ENCODE measurements at regions of chr4 and their contacts with region 1.

Region 1: GRCh38 chr4:66219401-66219800 is 549.1 kb upstream of the EPHA5 start:
- DNase-seq: no peak
- ATAC-seq: no peak

Region 2: GRCh38 chr4:66062044-66062443 is 157.4 kb before region 1 on chr4:
- intact Hi-C with region 1: no loop called
- DNase-seq: no peak
- ATAC-seq: no peak

Region 3: DNA sequence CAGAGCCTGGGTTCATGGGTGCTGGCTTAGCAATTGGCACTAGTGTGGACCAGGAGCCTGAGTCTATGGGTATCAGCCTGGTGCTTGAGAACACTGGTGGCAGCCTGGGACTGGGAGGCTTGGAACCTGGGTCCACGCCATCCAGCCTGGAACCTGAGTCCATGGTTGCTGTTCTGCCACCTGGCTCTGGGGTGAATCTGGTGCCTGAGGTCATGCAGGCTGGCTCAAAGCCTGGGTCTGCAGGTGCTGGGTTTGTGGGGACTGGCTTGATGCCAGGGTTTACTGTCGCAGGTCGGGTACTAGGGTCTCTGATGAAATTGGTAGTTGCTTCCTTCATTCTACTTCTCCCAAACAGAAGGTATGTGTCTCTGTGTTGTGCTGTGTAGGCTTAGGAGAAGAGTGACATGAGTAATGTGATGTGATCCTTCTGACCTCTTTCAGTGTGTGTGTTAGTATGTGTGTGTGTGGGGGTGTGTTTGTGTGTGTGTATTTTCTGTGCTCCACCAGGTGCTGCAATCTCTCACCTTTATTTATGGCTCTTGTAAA is 32.2 kb before region 1 on chr4:
- intact Hi-C with region 1: loop called (anchors 1 kb)
- DNase-seq: no peak
- ATAC-seq: no peak